ENCODE measurements at regions of chr7 and their contacts with region 1.

Region 1: DNA sequence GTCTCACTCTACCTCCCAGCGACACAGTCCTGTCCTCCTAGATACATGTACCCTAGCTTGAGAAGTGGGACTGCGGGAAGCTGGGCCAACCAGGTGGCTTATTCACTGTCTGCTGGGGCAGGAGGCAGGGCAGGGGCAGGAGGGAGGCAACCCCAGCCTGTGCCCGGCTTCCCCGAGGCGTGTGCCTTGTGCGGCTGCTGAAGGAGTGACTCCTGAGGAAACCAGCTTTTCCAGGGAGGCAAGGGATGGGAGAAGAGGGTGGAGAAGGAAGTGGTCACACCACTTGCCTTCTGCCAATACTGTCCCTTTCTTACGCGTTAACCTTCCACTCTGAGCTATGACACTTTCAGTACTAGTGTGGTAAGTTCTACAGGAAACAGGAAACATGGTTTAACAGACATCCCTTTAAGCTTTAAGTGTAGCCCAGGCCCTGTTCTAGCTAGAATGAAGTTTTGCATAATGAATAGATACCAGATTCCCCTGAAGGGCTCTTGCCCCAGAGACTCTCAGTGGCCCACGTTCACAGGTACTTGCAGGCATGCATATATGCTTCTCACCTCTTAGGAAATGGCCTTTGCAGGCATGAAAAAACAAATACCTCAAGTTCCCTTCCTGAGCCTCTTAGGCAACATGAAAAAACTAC is 40.6 kb downstream of the SYPL1 start:
- DNase-seq: peak; percentile 41
- H3K4me3 Mint-ChIP-seq: peak overlapping the region; percentile 75
- H3K27ac Mint-ChIP-seq: peak overlapping the region; percentile 98
- H3K4me1 Mint-ChIP-seq: peaks cover 62% of the 10 kb centered on the region
- H3K27me3 Mint-ChIP-seq: no peaks in the 10 kb centered on the region

Region 2: DNA sequence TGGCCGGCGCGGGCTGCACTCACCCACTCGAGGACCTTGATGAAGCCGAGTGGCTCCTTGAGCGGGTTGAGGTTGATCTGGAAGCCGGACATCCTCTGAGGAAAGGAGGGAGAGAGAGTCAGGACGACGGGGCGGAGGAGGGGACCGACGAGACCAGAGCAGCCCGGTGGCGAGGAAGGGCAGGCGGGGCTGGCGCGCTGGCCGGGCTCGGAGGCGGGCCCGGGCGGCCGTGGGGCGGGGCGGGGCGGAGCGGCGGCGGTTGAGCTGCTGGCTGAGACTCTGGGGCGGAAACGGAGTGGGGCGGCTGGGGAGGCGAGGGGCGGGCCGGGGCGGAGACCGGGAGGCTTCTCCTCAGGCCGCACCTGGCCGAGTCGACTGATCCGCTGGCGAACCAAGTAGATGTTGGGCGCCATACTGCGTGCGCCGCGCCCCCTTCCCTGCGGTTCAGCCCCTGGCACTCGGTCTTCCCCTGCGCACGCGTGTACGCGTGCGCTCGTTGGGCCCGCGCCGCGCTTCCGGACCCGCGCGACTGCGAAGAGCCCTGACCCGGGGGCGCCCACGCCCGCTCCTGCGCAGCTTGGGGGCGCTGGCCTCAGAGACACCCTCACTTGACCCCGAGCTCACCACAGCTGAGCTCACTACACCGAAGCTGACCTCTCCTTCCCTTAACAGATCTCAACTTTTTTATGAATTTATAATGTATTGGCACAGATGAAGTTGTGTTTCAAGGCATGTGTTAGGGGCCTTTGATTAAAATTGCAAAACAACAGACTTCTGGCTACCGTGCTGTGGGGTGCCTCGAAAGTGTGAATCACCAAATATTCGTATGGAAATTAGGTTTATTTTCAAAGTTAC is 40.9 kb after region 1 on chr7 and contains the start of gene SYPL1:
- intact Hi-C with region 1: loop called (anchors 1 kb)
- DNase-seq: peak; percentile 89
- H3K4me3 Mint-ChIP-seq: peak within 1 kb of the TSS; percentile 83
- H3K27ac Mint-ChIP-seq: peak within 1 kb of the TSS; percentile 92
- H3K4me1 Mint-ChIP-seq: peaks cover 54% of the 10 kb centered on the region
- H3K27me3 Mint-ChIP-seq: no peaks in the 10 kb centered on the region
- total RNA-seq, gene SYPL1: 38.2 and 40.9 TPM in 2 replicates